ENCODE measurements at regions of chr15 and their contacts with region 1.

Region 1: DNA sequence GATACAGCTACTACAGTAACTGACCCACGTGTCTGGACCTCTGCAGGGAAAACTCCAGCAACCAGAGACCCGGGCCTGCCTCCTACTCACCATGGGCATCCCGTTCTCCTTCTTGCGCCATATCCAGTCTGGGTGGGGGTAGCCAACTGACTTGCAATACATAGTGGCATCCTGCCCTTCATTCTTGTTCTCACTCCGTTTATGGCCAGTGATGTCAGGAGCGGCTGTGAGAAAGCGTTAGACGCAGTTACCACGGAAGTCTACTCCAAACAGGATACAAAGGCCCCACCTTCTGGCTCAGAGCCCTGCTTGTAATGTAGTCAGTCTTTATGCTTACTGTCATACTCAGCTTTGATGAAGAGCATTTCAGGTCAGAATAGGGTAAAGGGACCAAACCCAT is 59.6 kb downstream of the NPTN start:
- DNase-seq: peak in 1 of 2 donors; percentile 66
- ATAC-seq: peak; percentile 36 to 87 (median 60)
- H3K4me3 ChIP-seq: no peak overlapping the region
- H3K27ac ChIP-seq: peak overlapping the region in 7 of 10 donors; percentile 9 to 32 (median 19)
- H3K4me1 ChIP-seq: peaks cover 3 to 43% (median 24%) of the 10 kb centered on the region in 9 donors
- H3K27me3 ChIP-seq: no peaks in the 10 kb centered on the region
- CTCF ChIP-seq: no peak

Region 2: GRCh38 chr15:73608941-73609340 is 35.4 kb after region 1 on chr15:
- intact Hi-C with region 1: loop called in 1 of 10 experiments (anchors 5 kb)
- DNase-seq: no peak
- ATAC-seq: peak in 2 of 8 donors; percentile 37 to 48
- H3K4me3 ChIP-seq: no peak overlapping the region
- H3K27ac ChIP-seq: no peak overlapping the region
- H3K4me1 ChIP-seq: peaks cover 0 to 95% (median 69%) of the 10 kb centered on the region in 9 donors
- H3K27me3 ChIP-seq: no peaks in the 10 kb centered on the region
- CTCF ChIP-seq: no peak

Region 3: GRCh38 chr15:73691396-73691795 is 117.8 kb after region 1 on chr15:
- intact Hi-C with region 1: loop called in 4 of 10 experiments (anchors 5 to 10 kb)
- DNase-seq: peak; percentile 49 to 64
- ATAC-seq: peak; percentile 43 to 84 (median 70)
- H3K4me3 ChIP-seq: no peak overlapping the region
- H3K27ac ChIP-seq: peak overlapping the region in 5 of 10 donors; percentile 10 to 60 (median 36)
- H3K4me1 ChIP-seq: peaks cover 18 to 86% (median 68%) of the 10 kb centered on the region in 9 donors
- H3K27me3 ChIP-seq: peaks cover 0 to 11% (median 0%) of the 10 kb centered on the region in 7 donors
- CTCF ChIP-seq: peak in 7 of 9 donors; percentile 14 to 53 (median 29)

Measured in heart right ventricle (tissue), 16 donors.